ENCODE measurements at regions of chr16 and their contacts with region 1.

Region 1: DNA sequence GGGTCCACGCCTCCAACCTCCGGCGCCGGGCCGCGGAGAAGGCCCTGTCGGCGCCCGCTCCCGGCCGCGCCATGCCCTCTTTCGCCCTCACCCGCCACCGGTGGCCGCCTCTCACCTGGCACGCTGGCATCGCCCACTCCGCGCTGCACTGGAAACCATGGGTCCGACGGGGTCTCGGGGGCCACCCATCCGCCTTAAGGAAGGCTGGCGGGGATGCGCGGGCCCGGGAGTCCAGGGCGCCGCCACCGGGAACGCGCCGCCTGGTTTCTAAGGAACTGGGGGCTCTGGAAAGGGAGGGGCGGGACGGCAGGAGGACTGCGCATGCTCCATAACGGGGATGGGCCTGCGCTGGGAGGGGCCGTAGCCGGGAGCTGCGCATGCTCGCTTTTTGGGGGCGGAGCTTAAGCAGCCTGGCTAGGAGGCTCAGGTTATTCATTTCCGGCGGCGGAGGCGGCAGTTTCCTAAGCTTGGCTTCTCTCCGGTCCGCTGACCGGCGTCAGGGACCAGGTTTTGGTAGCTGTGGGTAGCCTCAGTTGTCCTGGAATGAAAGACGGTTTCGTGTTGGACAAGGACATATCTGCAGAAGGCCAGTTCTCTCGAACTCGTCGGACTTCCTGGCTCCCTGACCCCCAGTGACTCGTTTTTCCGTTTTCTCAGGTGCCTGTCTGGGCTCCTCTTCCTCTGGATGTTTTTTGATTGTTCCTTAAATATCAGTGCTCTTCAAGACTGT is at the start of gene GFOD2:
- DNase-seq: peak; percentile 96
- ATAC-seq: peak; percentile 99
- total RNA-seq, gene GFOD2: 9.0 TPM

Region 2: DNA sequence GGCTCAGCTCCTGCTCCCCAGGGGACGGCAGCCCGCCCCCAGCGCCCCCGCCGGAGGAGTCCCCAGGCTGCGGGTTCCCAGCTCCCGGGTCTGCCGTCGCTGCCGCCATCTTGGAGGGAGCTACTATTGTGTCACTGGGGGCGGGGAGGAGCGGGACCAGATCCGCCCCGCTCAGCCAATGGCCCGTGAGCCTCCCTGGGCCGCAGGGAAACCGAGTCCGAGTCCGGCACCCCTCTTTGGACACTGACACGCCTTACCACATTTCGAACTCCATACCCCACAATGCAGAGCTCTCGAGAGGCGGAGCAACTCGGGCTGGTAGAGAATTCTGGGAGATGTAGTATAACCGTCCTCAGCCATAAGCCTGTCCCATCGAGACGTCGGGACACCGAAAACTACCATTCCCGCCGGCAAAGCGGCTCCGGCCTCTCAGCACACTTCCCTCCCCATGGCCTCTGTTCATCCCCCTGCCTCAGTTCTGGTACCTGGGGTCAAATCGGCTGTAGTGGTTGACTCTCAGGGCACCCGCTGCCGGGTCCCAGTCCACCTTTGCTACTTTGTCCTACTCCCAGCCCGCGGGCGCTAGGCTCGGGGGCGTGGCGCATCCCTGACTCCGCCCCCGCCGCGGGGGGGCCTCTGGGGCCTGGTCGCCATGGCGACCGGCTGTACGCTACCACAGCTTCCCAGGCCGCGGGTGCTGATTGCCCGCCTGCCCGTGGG is 87.4 kb after region 1 on chr16 and contains the starts of genes RANBP10 and TSNAXIP1:
- intact Hi-C with region 1: loop called (anchors 2 kb)
- DNase-seq: peak; percentile 97
- ATAC-seq: peak; percentile 98
- total RNA-seq, gene RANBP10: 11.1 TPM
- total RNA-seq, gene TSNAXIP1: 0.41 TPM

Measured in Right ventricle myocardium inferior (tissue), 1 donor.